ENCODE measurements at regions of chr2 and their contacts with region 1.

Region 1: DNA sequence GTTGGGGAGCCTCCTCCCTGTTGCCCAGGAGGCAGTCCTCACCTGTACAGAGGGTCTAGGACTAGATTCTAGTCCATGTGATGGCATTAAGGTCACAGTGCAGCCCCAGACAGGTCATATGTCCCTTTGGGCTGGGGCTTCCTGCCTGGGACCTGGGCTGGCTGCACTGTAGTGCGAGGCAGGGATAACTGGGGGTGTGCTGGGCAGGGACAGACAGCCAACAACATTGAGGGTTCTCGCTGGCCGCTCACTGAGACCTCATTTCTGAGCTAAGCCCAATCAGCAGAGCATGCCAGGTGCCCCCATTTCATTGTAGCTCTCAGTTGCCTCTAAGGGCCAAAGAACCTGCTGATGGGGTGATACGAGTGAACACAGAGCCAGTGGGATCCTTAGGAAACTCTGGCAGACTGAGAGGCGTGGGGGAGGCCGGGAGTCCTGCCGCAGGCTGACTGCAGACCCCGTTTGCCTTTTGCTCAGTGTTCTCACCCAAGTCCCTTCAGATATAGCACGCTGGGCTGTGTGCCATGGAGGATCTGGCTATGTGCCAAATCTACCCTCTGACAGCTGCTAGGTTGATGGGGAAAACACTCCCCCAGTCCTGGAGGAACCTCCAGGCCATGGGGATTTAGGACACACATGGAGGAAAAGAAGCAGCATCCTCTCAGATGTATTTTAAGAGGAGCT is 51.9 kb downstream of the DYSF start:
- DNase-seq: peak in 1 of 2 donors; percentile 47
- ATAC-seq: no peak
- H3K4me3 ChIP-seq: no peak overlapping the region
- H3K27ac ChIP-seq: peak overlapping the region; percentile 54 to 80 (median 76)
- H3K4me1 ChIP-seq: peaks cover 46 to 60% of the 10 kb centered on the region in 2 donors
- H3K27me3 ChIP-seq: no peaks in the 10 kb centered on the region
- CTCF ChIP-seq: no peak
- POLR2A ChIP-seq: no peak

Region 2: GRCh38 chr2:71306762-71307161 is 198.5 kb before region 1 on chr2:
- in situ Hi-C with region 1: loop called in 3 of 4 experiments (anchors 5 to 10 kb)
- intact Hi-C with region 1: no loop called
- DNase-seq: peak in 1 of 2 donors; percentile 19
- ATAC-seq: peak in 1 of 2 donors; percentile 72
- H3K4me3 ChIP-seq: no peak overlapping the region
- H3K27ac ChIP-seq: peak overlapping the region in 3 of 4 donors; percentile 7 to 54 (median 36)
- H3K4me1 ChIP-seq: peaks cover 8 to 16% of the 10 kb centered on the region in 2 donors
- H3K27me3 ChIP-seq: no peaks in the 10 kb centered on the region
- CTCF ChIP-seq: no peak
- POLR2A ChIP-seq: no peak

Region 3: GRCh38 chr2:71460595-71461303 is 44.5 kb before region 1 on chr2:
- in situ Hi-C with region 1: loop called in 3 of 4 experiments (anchors 5 to 10 kb)
- intact Hi-C with region 1: loop called (anchors 1 kb)
- DNase-seq: peak in 1 of 2 donors; percentile 66
- ATAC-seq: peak; percentile 46 to 59
- H3K4me3 ChIP-seq: no peak overlapping the region
- H3K27ac ChIP-seq: peak overlapping the region; percentile 56 to 99 (median 93)
- H3K4me1 ChIP-seq: peaks cover 79 to 92% of the 10 kb centered on the region in 2 donors
- H3K27me3 ChIP-seq: no peaks in the 10 kb centered on the region
- CTCF ChIP-seq: peak; percentile 53 to 74 (median 58)
- POLR2A ChIP-seq: no peak

Region 4: DNA sequence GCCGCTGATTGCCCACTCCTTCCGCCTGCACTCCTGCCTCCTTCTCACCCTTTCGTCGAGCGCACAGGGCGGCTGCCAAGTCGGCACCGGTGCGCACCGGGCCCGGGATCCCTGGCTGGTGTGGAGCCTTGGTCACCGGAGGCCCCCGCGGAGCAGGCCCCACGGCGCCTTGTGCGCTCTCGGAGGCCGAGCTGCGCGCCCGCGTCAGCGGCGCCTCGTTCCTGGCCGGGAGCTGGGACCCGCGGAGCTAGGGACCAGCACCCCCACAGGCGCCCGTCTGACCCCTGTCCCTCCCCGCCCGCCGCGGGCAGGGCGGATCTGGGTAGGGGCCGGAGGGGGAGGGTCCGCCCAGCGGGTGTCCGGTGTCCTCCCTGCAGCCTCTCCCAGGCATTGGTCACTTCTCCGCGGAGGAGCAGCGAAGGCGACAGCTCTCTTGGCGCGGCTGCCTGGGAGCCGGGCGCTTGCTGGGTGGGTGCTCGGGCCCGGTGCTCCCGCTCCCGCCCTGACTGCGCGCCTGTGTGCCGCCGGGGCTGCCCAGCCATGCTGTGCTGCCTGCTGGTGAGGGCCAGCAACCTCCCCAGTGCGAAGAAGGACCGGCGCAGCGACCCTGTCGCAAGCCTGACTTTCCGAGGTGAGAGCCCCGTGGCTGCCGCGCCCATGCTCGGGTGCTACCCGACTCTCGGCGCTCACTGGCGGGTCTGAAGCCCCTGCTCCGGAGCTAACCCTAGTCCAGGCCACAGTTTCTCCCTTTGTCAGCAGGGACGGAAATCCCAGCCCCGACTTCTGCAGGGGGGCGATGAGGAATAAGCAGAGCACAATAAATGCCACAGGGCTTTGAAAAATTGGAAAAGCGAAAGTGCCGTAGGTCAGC is 38.7 kb before region 1 on chr2:
- in situ Hi-C with region 1: loop called in 3 of 4 experiments (anchors 5 to 10 kb)
- intact Hi-C with region 1: no loop called
- DNase-seq: peak; percentile 65 to 82
- ATAC-seq: peak; percentile 67 to 72
- H3K4me3 ChIP-seq: peak overlapping the region; percentile 68 to 88 (median 72)
- H3K27ac ChIP-seq: peak overlapping the region; percentile 77 to 99 (median 86)
- H3K4me1 ChIP-seq: peaks cover 68 to 79% of the 10 kb centered on the region in 2 donors
- H3K27me3 ChIP-seq: no peaks in the 10 kb centered on the region
- CTCF ChIP-seq: no peak
- POLR2A ChIP-seq: peak; percentile 52 to 65

Measured in gastrocnemius medialis (tissue), 4 donors.